Activated B cell treated with CpG ODN at 0.5 μM for 24 hours (primary cell): ENCODE measurements at regions of chr19 and their contacts with region 1.

Region 1: GRCh38 chr19:39397360-39398296 is 6.5 kb downstream of the MED29 start:
- DNase-seq: peak; percentile 91
- ATAC-seq: peak; percentile 59
- H3K4me3 Mint-ChIP-seq: peak overlapping the region; percentile 67
- H3K27ac Mint-ChIP-seq: peak overlapping the region; percentile 91
- H3K4me1 Mint-ChIP-seq: peaks cover 62% of the 10 kb centered on the region
- H3K27me3 Mint-ChIP-seq: no peaks in the 10 kb centered on the region
- CTCF ChIP-seq: peak; percentile 84

Region 2: GRCh38 chr19:39351537-39352064 is 46.0 kb before region 1 on chr19:
- CTCF ChIA-PET with region 1: interaction called, 3 read pairs
- POLR2A ChIA-PET with region 1: no interaction called
- intact Hi-C with region 1: loop called (anchors 1 kb)
- DNase-seq: no peak
- ATAC-seq: peak; percentile 97
- H3K4me3 Mint-ChIP-seq: no peak overlapping the region
- H3K27ac Mint-ChIP-seq: peak overlapping the region; percentile 86
- H3K4me1 Mint-ChIP-seq: peaks cover 25% of the 10 kb centered on the region
- H3K27me3 Mint-ChIP-seq: no peaks in the 10 kb centered on the region
- CTCF ChIP-seq: no peak

Region 3: DNA sequence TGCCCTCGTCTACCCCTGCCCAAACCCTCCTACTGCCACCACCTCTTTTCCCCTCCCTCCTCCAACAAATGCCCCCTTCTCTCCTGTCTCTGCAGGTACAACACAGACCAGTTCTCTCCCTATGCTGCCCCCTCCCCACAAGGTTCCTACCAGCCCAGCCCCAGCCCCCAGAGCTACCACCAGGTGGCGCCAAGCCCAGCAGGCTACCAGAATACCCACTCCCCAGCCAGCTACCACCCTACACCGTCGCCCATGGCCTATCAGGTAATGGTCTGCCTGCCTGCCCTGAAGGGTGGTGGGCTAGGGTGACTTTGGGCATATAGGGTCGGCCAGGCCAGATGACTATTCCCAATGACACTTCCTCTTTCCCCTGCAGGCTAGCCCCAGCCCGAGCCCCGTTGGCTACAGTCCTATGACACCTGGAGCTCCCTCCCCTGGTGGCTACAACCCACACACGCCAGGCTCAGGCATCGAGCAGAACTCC is 76.6 kb after region 1 on chr19:
- CTCF ChIA-PET with region 1: no interaction called
- POLR2A ChIA-PET with region 1: interaction called, 5 read pairs
- intact Hi-C with region 1: loop called (anchors 2 kb)
- DNase-seq: peak; percentile 71
- ATAC-seq: peak; percentile 88
- H3K4me3 Mint-ChIP-seq: no peak overlapping the region
- H3K27ac Mint-ChIP-seq: no peak overlapping the region
- H3K4me1 Mint-ChIP-seq: no peaks in the 10 kb centered on the region
- H3K27me3 Mint-ChIP-seq: no peaks in the 10 kb centered on the region
- CTCF ChIP-seq: no peak